CD4-positive, alpha-beta T cell (primary cell): ENCODE measurements at regions of chr17 and their contacts with region 1.

Region 1: GRCh38 chr17:27293898-27294688 is at the start of gene WSB1:
- DNase-seq: peak; percentile 86 to 97 (median 92)
- ATAC-seq: peak; percentile 80
- H3K4me3 ChIP-seq: peak within 1 kb of the TSS; percentile 71
- H3K4me3 Mint-ChIP-seq: peak within 1 kb of the TSS; percentile 98
- H3K27ac ChIP-seq: peak within 1 kb of the TSS; percentile 97 to 99
- H3K27ac Mint-ChIP-seq: peak within 1 kb of the TSS; percentile 96
- H3K4me1 ChIP-seq: peaks cover 36% of the 10 kb centered on the region
- H3K4me1 Mint-ChIP-seq: peaks cover 44% of the 10 kb centered on the region
- H3K27me3 ChIP-seq: no peaks in the 10 kb centered on the region
- H3K27me3 Mint-ChIP-seq: no peaks in the 10 kb centered on the region
- CTCF ChIP-seq: no peak
- total RNA-seq, gene WSB1: 99.4 to 104 TPM

Region 2: GRCh38 chr17:27236717-27237315 is 57.3 kb before region 1 on chr17:
- CTCF ChIA-PET with region 1: interaction called, 4 read pairs
- POLR2A ChIA-PET with region 1: interaction called, 12 read pairs
- intact Hi-C with region 1: loop called in 1 of 2 experiments (anchors 5 kb)
- DNase-seq: peak; percentile 55 to 87 (median 70)
- ATAC-seq: peak; percentile 91
- H3K4me3 ChIP-seq: no peak overlapping the region
- H3K4me3 Mint-ChIP-seq: no peak overlapping the region
- H3K27ac ChIP-seq: no peak overlapping the region
- H3K27ac Mint-ChIP-seq: no peak overlapping the region
- H3K4me1 ChIP-seq: no peaks in the 10 kb centered on the region
- H3K4me1 Mint-ChIP-seq: no peaks in the 10 kb centered on the region
- H3K27me3 ChIP-seq: no peaks in the 10 kb centered on the region
- H3K27me3 Mint-ChIP-seq: no peaks in the 10 kb centered on the region
- CTCF ChIP-seq: peak; percentile 78

Region 3: DNA sequence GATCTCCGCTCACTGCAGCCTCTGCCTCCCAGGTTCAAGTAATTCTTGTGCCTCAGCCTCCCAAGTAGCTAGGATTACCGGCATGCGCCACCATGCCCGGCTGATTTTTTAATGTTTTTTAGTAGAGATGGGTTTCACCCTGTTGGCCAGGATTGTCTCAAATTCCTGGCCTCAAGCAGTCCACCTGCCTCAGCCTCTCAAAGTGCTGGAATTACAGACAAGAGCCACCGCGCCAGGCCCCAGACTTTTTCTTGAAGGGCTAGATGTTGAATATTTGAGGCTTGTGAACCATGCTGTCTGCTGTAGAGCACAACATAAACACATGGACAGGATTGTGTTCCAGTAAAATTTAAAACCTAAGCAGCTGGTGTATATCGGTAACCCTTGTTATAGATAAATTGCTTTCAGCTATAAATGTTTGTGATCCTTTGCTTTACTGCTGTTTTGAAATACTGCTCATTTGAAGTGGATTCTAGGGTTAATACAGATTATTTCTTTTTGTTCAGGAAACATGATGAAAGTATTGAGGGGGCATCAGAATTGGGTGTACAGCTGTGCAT is 12.3 kb after region 1 on chr17:
- CTCF ChIA-PET with region 1: no interaction called
- POLR2A ChIA-PET with region 1: interaction called, 23 read pairs
- intact Hi-C with region 1: no loop called
- DNase-seq: no peak
- ATAC-seq: no peak
- H3K4me3 ChIP-seq: no peak overlapping the region
- H3K4me3 Mint-ChIP-seq: no peak overlapping the region
- H3K27ac ChIP-seq: no peak overlapping the region
- H3K27ac Mint-ChIP-seq: no peak overlapping the region
- H3K4me1 ChIP-seq: peaks cover 7% of the 10 kb centered on the region
- H3K4me1 Mint-ChIP-seq: peaks cover 31% of the 10 kb centered on the region
- H3K27me3 ChIP-seq: no peaks in the 10 kb centered on the region
- H3K27me3 Mint-ChIP-seq: no peaks in the 10 kb centered on the region
- CTCF ChIP-seq: no peak

Region 4: DNA sequence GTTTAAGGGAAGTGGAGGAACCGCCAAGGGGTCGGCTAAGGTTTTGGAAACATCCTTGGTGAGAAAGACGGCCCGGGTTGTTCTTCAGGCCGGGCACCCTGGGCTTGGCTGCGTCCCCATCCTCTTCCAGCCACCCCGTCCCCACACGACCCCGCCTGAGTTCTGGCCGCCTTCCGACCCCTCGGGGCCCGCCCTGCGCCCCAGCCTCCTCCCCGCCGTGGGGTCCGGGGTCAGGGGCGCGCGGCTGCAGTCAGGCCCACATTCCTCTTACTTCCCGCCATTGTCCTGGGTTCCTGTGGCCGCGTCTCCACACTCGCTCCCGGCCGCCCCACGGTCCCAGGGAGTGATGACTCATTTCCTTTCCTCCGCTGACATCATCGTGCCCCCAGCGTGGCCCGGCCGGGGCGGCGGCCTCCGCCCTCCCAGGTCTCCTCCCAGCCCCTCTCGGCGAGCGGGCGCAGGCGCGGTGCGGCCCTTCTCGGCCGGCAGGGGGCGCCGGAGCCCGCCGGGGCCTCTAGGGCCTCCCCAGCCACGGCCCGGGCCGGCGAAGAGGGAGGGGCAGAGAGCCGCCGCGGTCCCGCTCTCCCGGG is 59.5 kb after region 1 on chr17:
- CTCF ChIA-PET with region 1: interaction called, 4 read pairs
- POLR2A ChIA-PET with region 1: interaction called, 19 read pairs
- intact Hi-C with region 1: loop called in 1 of 2 experiments (anchors 2 kb)
- DNase-seq: peak; percentile 64 to 94 (median 82)
- ATAC-seq: peak; percentile 91
- H3K4me3 ChIP-seq: peak overlapping the region; percentile 67
- H3K4me3 Mint-ChIP-seq: peak overlapping the region; percentile 88
- H3K27ac ChIP-seq: peak overlapping the region; percentile 72 to 89
- H3K27ac Mint-ChIP-seq: peak overlapping the region; percentile 65
- H3K4me1 ChIP-seq: peaks cover 20% of the 10 kb centered on the region
- H3K4me1 Mint-ChIP-seq: peaks cover 19% of the 10 kb centered on the region
- H3K27me3 ChIP-seq: no peaks in the 10 kb centered on the region
- H3K27me3 Mint-ChIP-seq: no peaks in the 10 kb centered on the region
- CTCF ChIP-seq: peak; percentile 73

Region 5: GRCh38 chr17:27654654-27655524 is 360.8 kb after region 1 on chr17:
- CTCF ChIA-PET with region 1: no interaction called
- POLR2A ChIA-PET with region 1: no interaction called
- intact Hi-C with region 1: no loop called
- DNase-seq: peak; percentile 40 to 81 (median 55)
- ATAC-seq: peak; percentile 69
- H3K4me3 ChIP-seq: no peak overlapping the region
- H3K4me3 Mint-ChIP-seq: no peak overlapping the region
- H3K27ac ChIP-seq: no peak overlapping the region
- H3K27ac Mint-ChIP-seq: no peak overlapping the region
- H3K4me1 ChIP-seq: peaks cover 9% of the 10 kb centered on the region
- H3K4me1 Mint-ChIP-seq: peaks cover 9% of the 10 kb centered on the region
- H3K27me3 ChIP-seq: no peaks in the 10 kb centered on the region
- H3K27me3 Mint-ChIP-seq: peaks cover 5% of the 10 kb centered on the region
- CTCF ChIP-seq: peak; percentile 97

Region 6: GRCh38 chr17:27805520-27806146 is 511.5 kb after region 1 on chr17:
- CTCF ChIA-PET with region 1: no interaction called
- POLR2A ChIA-PET with region 1: interaction called, 6 read pairs
- intact Hi-C with region 1: loop called in 1 of 2 experiments (anchors 5 kb)
- DNase-seq: peak; percentile 71 to 91 (median 76)
- ATAC-seq: peak; percentile 63
- H3K4me3 ChIP-seq: peak overlapping the region; percentile 45
- H3K4me3 Mint-ChIP-seq: peak overlapping the region; percentile 75
- H3K27ac ChIP-seq: peak overlapping the region; percentile 40 to 43
- H3K27ac Mint-ChIP-seq: peak overlapping the region; percentile 75
- H3K4me1 ChIP-seq: peaks cover 37% of the 10 kb centered on the region
- H3K4me1 Mint-ChIP-seq: peaks cover 22% of the 10 kb centered on the region
- H3K27me3 ChIP-seq: no peaks in the 10 kb centered on the region
- H3K27me3 Mint-ChIP-seq: no peaks in the 10 kb centered on the region
- CTCF ChIP-seq: peak; percentile 85